AG04449 (cell line): ENCODE measurements at regions of chr10 and their contacts with region 1.

Region 1: GRCh38 chr10:36880898-36881297 is 244.5 kb upstream of the ANKRD30A start:
- DNase-seq: no peak
- H3K4me3 ChIP-seq: no peak overlapping the region
- CTCF ChIP-seq: peak; percentile 33

Region 2: DNA sequence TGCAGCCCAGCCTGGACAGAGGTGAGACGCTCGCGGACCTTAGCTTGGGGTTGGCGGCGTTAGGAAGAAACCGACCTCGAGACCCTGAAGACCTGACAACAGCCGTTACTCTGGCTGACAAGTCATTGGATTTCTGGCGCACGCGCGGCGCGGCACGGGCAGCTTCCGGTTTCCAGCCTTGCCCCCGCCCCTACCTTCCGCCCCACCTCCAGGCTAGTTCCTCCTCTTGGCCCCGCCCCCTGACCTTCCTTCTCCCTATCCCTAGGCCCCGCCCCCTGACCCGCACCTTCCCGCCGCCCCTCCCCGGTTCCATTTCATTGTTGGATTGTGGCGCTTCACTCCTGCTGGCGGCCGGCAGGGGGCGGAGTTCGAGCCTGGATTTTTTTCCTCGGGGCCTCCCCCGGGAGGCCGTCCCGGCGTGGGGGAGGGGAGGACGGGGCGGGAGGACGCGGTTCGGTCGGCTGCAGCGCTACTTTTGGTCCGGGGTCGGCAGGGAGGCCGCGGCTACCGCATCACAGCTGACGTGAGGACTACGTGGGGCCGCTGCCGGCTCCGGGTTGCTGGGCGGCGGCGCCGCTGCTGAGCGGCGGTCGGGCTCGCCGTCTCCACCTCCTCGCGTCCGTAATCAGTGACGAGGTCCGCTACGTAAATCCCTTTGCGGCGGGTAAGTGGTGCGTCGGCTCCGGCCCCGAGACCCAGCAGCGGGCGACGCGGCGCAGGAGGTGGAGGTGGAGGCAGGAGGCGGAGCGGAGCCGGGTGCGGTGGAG is 1754.2 kb before region 1 on chr10 and contains the start of gene CREM:
- CTCF ChIA-PET with region 1: interaction called, 13 read pairs
- POLR2A ChIA-PET with region 1: no interaction called
- DNase-seq: peak; percentile 61
- H3K4me3 ChIP-seq: peak within 1 kb of the TSS; percentile 74
- CTCF ChIP-seq: peak; percentile 75

Region 3: GRCh38 chr10:35563261-35563891 is 1317.5 kb before region 1 on chr10:
- CTCF ChIA-PET with region 1: interaction called, 20 read pairs
- POLR2A ChIA-PET with region 1: no interaction called
- DNase-seq: no peak
- H3K4me3 ChIP-seq: no peak overlapping the region
- CTCF ChIP-seq: peak; percentile 95

Region 4: DNA sequence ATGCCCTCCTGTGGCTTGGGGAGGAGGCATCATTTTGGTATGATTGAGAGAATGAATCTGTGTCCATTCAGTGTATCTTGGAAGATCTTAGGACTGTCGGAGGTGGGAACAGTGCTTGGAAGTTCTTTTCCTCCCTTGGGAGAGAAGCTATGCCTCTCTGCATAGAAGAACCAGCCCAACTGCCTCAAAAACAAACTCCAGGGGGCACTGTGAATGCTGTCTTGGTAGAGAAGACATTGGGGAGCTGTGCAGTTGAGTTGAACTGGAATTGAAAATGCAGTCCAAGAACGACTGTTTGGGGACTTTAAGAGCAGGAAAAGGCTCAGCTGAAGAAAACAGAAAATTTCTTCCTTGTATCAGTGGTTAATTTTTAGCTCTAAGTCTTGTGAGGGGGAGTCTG is 1280.7 kb before region 1 on chr10:
- CTCF ChIA-PET with region 1: interaction called, 10 read pairs
- POLR2A ChIA-PET with region 1: no interaction called
- DNase-seq: no peak
- H3K4me3 ChIP-seq: no peak overlapping the region
- CTCF ChIP-seq: no peak

Region 5: DNA sequence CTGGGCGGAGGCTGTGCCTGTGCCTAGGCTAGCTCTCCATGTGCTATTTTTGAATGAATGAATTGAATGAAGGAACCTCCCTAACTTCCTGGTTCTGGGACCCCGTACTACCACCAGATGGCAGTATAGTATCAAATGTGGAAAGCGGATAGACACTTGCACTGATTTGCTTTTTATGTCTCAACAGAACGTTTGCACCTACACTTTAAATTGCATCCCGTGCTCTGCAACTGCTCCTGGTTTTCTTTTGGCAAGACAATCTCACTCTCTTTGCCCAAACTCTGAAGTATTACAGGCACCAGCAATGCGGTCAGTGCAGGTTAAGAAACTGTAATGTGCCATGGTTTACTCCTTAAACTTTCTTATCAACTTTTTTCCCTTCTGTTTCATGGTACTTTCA is 1245.3 kb before region 1 on chr10:
- CTCF ChIA-PET with region 1: interaction called, 118 read pairs
- POLR2A ChIA-PET with region 1: no interaction called
- DNase-seq: no peak
- H3K4me3 ChIP-seq: no peak overlapping the region
- CTCF ChIP-seq: peak; percentile 74

Region 6: GRCh38 chr10:36388166-36388565 is 492.7 kb before region 1 on chr10:
- CTCF ChIA-PET with region 1: no interaction called
- POLR2A ChIA-PET with region 1: no interaction called
- DNase-seq: no peak
- H3K4me3 ChIP-seq: no peak overlapping the region
- CTCF ChIP-seq: no peak

Region 7: GRCh38 chr10:36994886-36995285 is 114.0 kb after region 1 on chr10:
- CTCF ChIA-PET with region 1: no interaction called
- POLR2A ChIA-PET with region 1: no interaction called
- DNase-seq: no peak
- H3K4me3 ChIP-seq: no peak overlapping the region
- CTCF ChIP-seq: no peak